HCT116 (cell line): ENCODE measurements at regions of chr6 and their contacts with region 1.

Region 1: GRCh38 chr6:157946865-157947532 is 34.7 kb upstream of the SYNJ2 start:
- DNase-seq: no peak
- ATAC-seq: peak; percentile 81
- H3K4me3 ChIP-seq: no peak overlapping the region
- H3K27ac ChIP-seq: no peak overlapping the region
- H3K4me1 ChIP-seq: no peaks in the 10 kb centered on the region
- H3K27me3 ChIP-seq: no peaks in the 10 kb centered on the region
- CTCF ChIP-seq: peak; percentile 40 to 57 (median 55); a peak in 5 of 6 replicates
- POLR2A ChIP-seq: no peak
- RAD21 ChIP-seq: peak; percentile 72

Region 2: DNA sequence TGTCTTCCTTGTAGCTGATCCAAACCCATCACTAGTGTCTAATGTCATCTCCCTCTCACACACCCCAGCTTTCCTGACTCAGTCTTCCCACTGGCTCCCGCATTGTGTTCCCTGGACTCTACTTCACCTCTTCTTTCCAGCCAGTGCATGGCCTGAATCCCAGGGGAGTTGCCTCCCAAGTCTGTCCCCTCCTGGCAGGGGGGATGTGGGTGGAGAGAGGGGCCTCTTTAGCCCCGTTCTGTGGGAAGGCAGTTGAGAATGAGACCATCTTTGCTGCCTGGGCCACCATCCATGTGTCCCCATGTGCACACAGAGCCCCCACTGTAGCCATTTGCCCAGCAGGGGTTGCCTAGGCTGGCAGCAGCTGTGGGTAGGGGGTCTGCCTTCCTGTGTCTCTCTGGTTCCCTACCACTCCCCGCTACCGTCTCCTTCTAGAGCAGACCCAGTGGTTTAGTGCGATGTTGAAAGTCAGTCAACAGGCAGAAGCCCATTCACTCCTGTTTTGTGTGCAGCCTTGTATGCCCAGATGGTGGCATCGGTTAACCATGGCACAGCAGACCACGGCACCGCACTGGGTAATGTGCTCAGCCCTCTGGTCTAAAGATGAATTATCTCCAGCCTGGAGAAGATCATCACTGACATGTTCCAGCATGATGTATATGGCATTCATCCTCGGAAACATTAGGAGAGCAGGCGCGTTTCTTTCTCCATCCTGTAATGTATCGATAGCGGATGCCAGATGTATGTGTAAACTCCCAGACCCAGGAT is 302.8 kb before region 1 on chr6:
- CTCF ChIA-PET with region 1: no interaction called
- POLR2A ChIA-PET with region 1: no interaction called
- RAD21 ChIA-PET with region 1: no interaction called
- intact Hi-C with region 1: loop called (anchors 10 kb)
- DNase-seq: no peak
- ATAC-seq: peak; percentile 78
- H3K4me3 ChIP-seq: no peak overlapping the region
- H3K27ac ChIP-seq: no peak overlapping the region
- H3K4me1 ChIP-seq: peaks cover 7 to 9% of the 10 kb centered on the region in 2 experiments; a peak in 3 of 4 replicates
- H3K27me3 ChIP-seq: no peaks in the 10 kb centered on the region
- CTCF ChIP-seq: peak; percentile 31 to 49 (median 42); a peak in 5 of 6 replicates
- POLR2A ChIP-seq: no peak
- RAD21 ChIP-seq: peak; percentile 75